CD14-positive monocyte (primary cell): ENCODE measurements at regions of chr10 and their contacts with region 1.

Region 1: DNA sequence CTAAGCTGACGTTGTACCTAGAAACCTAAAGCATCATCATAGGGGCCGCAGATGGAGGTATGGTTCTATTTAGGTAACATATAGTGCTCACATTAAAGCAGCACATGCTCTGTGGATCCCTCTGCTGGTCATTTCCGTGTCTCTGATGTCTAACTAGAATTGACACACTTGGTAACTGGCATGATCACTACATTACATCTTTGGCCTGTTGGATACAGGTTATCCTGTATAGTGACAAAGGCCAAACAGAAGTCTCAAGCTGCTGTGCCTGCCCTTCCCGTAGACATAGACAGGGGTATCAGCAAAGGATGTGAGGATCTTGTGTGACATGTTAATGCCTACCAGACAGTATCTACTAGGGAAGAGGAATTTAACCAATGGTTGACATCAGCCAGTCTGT is 51.2 kb downstream of the KIF5B start:
- DNase-seq: peak; percentile 38 to 62 (median 49)
- H3K4me3 ChIP-seq: no peak overlapping the region
- H3K4me3 Mint-ChIP-seq: no peak overlapping the region
- H3K27ac ChIP-seq: no peak overlapping the region
- H3K27ac Mint-ChIP-seq: no peak overlapping the region
- H3K4me1 ChIP-seq: peaks cover 2 to 8% of the 10 kb centered on the region in 2 donors
- H3K4me1 Mint-ChIP-seq: peaks cover 15% of the 10 kb centered on the region
- H3K27me3 ChIP-seq: no peaks in the 10 kb centered on the region
- H3K27me3 Mint-ChIP-seq: peaks cover 0 to 3% (median 0%) of the 10 kb centered on the region in 3 donors
- CTCF ChIP-seq: peak; percentile 77

Region 2: DNA sequence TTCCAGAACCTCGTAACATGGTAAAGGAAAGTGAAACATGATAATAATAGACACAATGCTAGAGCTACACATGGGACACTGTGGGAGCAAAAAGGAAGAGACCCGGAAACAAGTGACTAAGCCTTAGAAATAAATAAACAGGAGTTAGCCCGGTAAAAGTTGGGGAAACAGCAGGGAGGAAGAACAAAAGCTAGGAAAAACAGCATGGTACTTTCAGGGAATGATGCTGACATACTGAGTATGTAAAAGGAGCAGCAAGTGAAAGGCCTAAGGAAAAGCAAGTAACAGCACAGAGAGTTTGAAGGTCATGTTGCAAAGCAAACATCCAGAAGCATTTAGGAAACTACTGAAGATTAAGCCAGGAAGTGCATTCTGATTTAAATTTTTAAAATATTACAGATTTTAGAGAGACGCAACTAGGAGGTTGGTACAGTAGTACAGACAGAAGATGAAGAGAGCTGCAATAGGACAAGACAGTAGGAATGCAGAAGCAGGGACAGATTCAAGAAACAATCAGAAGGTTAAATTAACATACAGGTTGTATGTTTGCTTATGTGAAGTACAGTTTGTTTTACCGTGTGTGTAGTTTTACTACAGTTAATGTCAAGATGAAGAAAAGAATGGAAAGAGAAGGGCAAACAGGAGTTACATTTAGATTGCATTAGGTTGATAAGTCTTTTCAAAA is 140.1 kb before region 1 on chr10:
- intact Hi-C with region 1: loop called (anchors 5 to 10 kb)
- DNase-seq: no peak
- H3K4me3 ChIP-seq: no peak overlapping the region
- H3K4me3 Mint-ChIP-seq: no peak overlapping the region
- H3K27ac ChIP-seq: no peak overlapping the region
- H3K27ac Mint-ChIP-seq: no peak overlapping the region
- H3K4me1 ChIP-seq: peaks cover 4 to 7% of the 10 kb centered on the region in 2 donors
- H3K4me1 Mint-ChIP-seq: peaks cover 21% of the 10 kb centered on the region
- H3K27me3 ChIP-seq: no peaks in the 10 kb centered on the region
- H3K27me3 Mint-ChIP-seq: no peaks in the 10 kb centered on the region
- CTCF ChIP-seq: no peak

Region 3: DNA sequence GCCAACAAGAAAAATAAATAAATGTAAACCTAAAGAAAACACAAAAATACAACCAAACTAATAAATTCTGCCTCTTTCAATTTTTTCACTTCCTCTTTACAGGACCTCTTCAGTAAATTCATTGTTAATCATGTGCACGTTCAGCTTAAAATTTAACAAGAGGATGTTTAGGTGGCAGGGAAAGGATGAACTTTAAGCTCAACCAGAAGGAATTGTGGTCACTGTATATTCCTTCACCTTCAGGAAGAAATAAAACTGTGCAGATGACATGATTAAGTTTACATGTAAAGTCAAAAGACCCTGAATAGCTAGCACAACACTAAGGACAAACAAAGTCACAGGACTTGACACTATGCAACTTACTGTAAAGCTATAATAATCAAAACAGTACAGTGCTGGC is 18.2 kb after region 1 on chr10:
- intact Hi-C with region 1: no loop called
- DNase-seq: no peak
- H3K4me3 ChIP-seq: no peak overlapping the region
- H3K4me3 Mint-ChIP-seq: no peak overlapping the region
- H3K27ac ChIP-seq: peak overlapping the region in 1 of 2 donors; percentile 21
- H3K27ac Mint-ChIP-seq: peak overlapping the region in 5 of 7 donors; percentile 23 to 48 (median 44)
- H3K4me1 ChIP-seq: no peaks in the 10 kb centered on the region
- H3K4me1 Mint-ChIP-seq: peaks cover 5% of the 10 kb centered on the region
- H3K27me3 ChIP-seq: no peaks in the 10 kb centered on the region
- H3K27me3 Mint-ChIP-seq: no peaks in the 10 kb centered on the region
- CTCF ChIP-seq: no peak